ENCODE measurements at regions of chr2 and their contacts with region 1.

Region 1: DNA sequence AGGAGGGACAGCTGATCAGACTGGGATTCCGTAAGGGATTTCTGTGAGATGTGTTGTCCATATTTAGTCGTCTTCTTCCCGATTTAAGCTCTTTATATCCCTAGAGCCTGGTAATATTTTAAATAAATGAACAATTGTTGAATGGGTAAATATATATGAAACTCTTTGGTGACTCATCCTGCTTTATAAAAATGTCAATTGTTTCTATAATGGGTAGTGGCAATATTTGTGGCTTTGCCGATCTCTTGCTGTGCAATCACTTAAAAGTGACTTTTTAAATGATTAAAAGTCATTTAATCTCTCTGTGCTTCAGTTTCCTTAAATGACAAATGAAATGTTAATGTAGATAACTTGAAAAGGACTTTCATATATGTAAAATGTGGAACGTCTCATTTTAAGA is 339.2 kb downstream of the RNF144A start:
- DNase-seq: no peak
- ATAC-seq: no peak
- H3K4me3 Mint-ChIP-seq: no peak overlapping the region
- H3K27ac Mint-ChIP-seq: no peak overlapping the region
- H3K4me1 Mint-ChIP-seq: no peaks in the 10 kb centered on the region
- H3K27me3 Mint-ChIP-seq: peaks cover 2% of the 10 kb centered on the region
- CTCF ChIP-seq: no peak

Region 2: GRCh38 chr2:8219631-8220355 is 963.4 kb after region 1 on chr2:
- CTCF ChIA-PET with region 1: no interaction called
- POLR2A ChIA-PET with region 1: no interaction called
- intact Hi-C with region 1: loop called (anchors 5 kb)
- DNase-seq: no peak
- ATAC-seq: no peak
- H3K4me3 Mint-ChIP-seq: no peak overlapping the region
- H3K27ac Mint-ChIP-seq: no peak overlapping the region
- H3K4me1 Mint-ChIP-seq: no peaks in the 10 kb centered on the region
- H3K27me3 Mint-ChIP-seq: peaks cover 15% of the 10 kb centered on the region
- CTCF ChIP-seq: no peak

Measured in activated B cell treated with CpG ODN at 0.5 μM for 24 hours (primary cell).